ENCODE measurements at regions of chr6 and their contacts with region 1.

Region 1: DNA sequence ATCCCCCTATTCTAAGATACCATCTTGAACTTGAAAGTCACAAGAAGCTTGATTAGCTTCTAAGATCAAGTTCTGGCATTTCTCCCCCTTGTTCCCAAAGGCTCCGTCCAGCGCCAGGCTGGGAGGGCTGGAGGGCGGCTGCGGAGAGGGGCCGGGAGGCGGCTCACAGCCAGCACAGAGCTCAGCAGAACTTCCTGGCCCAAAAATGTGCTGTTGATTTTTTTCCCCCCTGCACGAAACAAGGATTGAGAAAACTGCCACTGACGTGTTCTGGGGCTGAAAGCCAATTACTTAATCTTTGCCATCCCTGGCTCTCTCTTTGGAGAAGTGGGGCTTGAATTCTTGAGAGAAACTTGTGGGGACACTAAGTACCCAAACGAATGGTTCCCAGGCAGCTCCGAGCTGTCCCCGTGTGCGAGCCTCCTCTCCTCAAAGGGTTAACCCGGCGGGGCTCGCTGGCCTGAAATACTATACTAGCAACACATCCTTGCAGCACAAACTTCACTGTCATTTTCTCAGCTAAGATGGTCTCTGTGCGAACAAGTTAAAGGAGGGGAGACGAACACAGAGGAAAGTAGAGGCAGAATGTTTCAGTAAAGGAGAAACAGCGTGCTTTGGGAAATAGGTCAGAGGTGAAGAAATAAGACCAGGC is 452 bp downstream of the TRAF3IP2 start:
- DNase-seq: no peak
- ATAC-seq: peak; percentile 46
- H3K4me3 ChIP-seq: peak overlapping the region; percentile 60 to 89 (median 82)
- H3K4me3 Mint-ChIP-seq: peak overlapping the region; percentile 93
- H3K27ac ChIP-seq: peak overlapping the region; percentile 76 to 78
- H3K27ac Mint-ChIP-seq: peak overlapping the region; percentile 89
- H3K4me1 ChIP-seq: peaks cover 22 to 25% of the 10 kb centered on the region in 2 donors
- H3K4me1 Mint-ChIP-seq: peaks cover 44% of the 10 kb centered on the region
- H3K27me3 ChIP-seq: no peaks in the 10 kb centered on the region
- H3K27me3 Mint-ChIP-seq: no peaks in the 10 kb centered on the region
- CTCF ChIP-seq: no peak

Region 2: DNA sequence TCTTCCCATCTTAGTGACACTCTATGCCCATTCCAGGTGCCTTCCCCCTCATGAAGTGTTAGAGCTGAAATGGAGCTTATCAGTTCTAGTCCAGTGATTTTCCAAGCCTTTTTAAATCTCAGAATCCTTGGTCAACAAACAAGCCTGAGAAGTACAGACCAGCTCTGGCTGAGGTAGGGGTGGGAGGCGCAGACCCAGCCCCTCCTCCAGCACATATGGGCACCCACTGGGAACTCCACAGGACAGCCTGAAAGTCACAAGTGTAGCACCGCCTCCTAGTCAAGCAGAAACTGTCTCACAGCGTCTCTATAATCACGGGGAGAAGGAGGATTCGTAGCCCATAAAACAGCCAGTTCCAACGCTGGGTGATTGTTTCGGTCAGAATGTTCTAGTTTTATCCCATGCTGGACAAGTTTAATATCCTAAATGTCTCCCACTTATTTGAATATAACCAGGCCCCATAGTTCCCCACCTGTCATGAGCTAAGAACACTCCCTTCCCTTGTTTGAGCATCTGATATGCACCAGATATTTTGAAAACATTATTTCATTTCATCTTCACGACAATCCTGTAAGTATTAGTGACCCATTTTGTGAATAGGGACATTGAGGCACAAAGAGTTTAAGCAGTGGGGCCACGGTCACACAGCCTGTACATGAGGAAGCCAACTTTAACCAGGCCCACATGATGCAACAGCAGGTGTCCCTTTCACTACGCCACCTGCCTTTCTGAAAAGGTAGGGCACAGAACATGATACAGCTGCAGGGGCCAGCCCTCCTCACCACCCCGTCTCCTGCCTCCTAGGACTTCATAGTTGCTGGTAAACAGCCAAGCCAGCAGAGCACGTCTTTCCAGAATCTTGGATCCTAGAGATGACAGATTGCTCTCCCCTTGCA is 39.7 kb before region 1 on chr6:
- CTCF ChIA-PET with region 1: no interaction called
- POLR2A ChIA-PET with region 1: no interaction called
- intact Hi-C with region 1: loop called (anchors 5 kb)
- DNase-seq: peak; percentile 59
- ATAC-seq: peak; percentile 83
- H3K4me3 ChIP-seq: no peak overlapping the region
- H3K4me3 Mint-ChIP-seq: no peak overlapping the region
- H3K27ac ChIP-seq: no peak overlapping the region
- H3K27ac Mint-ChIP-seq: peak overlapping the region; percentile 37
- H3K4me1 ChIP-seq: peaks cover 11 to 13% of the 10 kb centered on the region in 2 donors
- H3K4me1 Mint-ChIP-seq: peaks cover 22% of the 10 kb centered on the region
- H3K27me3 ChIP-seq: no peaks in the 10 kb centered on the region
- H3K27me3 Mint-ChIP-seq: no peaks in the 10 kb centered on the region
- CTCF ChIP-seq: peak; percentile 52

Measured in B cell (primary cell).